Endothelial cell of umbilical vein (primary cell): ENCODE measurements at regions of chr21 and their contacts with region 1.

Region 1: GRCh38 chr21:15729674-15730483 is at the start of gene USP25:
- DNase-seq: peak; percentile 75
- H3K4me3 ChIP-seq: peak within 1 kb of the TSS; percentile 92 to 99 (median 95)
- H3K27ac ChIP-seq: peak within 1 kb of the TSS; percentile 82
- H3K4me1 ChIP-seq: peaks cover 19% of the 10 kb centered on the region
- H3K27me3 ChIP-seq: no peaks in the 10 kb centered on the region
- CTCF ChIP-seq: no peak
- POLR2A ChIP-seq: peak; percentile 82
- total RNA-seq, gene USP25: 66.9 and 67.5 TPM in 2 replicates

Region 2: GRCh38 chr21:15455819-15456462 is 273.9 kb before region 1 on chr21:
- CTCF ChIA-PET with region 1: no interaction called
- POLR2A ChIA-PET with region 1: no interaction called
- dilution Hi-C with region 1: no loop called
- intact Hi-C with region 1: no loop called
- DNase-seq: no peak
- H3K4me3 ChIP-seq: no peak overlapping the region
- H3K27ac ChIP-seq: no peak overlapping the region
- H3K4me1 ChIP-seq: no peaks in the 10 kb centered on the region
- H3K27me3 ChIP-seq: no peaks in the 10 kb centered on the region
- CTCF ChIP-seq: no peak
- POLR2A ChIP-seq: no peak

Region 3: DNA sequence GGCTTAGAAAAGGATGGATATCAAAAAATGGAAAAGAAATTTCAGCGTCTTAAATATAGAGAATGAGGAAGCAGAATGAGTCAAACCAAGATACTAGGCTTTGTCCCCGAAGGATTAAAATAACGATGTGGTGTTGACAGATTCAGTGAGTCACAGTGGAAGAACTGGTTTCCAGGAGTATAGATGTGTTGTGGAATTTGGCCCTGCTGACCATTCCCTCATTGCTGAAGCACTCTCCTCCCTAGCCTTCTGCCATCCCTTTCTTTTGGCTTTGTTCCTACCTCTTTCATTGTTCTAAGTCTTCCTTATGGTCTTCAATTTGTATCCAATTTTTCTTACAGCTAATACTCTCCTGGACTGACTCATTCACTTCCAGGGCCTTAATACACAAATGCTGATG is 23.2 kb before region 1 on chr21:
- CTCF ChIA-PET with region 1: interaction called, 5 read pairs
- POLR2A ChIA-PET with region 1: no interaction called
- dilution Hi-C with region 1: no loop called
- intact Hi-C with region 1: loop called (anchors 1 kb)
- DNase-seq: peak; percentile 95
- H3K4me3 ChIP-seq: no peak overlapping the region
- H3K27ac ChIP-seq: no peak overlapping the region
- H3K4me1 ChIP-seq: peaks cover 8% of the 10 kb centered on the region
- H3K27me3 ChIP-seq: no peaks in the 10 kb centered on the region
- CTCF ChIP-seq: no peak
- POLR2A ChIP-seq: no peak

Region 4: DNA sequence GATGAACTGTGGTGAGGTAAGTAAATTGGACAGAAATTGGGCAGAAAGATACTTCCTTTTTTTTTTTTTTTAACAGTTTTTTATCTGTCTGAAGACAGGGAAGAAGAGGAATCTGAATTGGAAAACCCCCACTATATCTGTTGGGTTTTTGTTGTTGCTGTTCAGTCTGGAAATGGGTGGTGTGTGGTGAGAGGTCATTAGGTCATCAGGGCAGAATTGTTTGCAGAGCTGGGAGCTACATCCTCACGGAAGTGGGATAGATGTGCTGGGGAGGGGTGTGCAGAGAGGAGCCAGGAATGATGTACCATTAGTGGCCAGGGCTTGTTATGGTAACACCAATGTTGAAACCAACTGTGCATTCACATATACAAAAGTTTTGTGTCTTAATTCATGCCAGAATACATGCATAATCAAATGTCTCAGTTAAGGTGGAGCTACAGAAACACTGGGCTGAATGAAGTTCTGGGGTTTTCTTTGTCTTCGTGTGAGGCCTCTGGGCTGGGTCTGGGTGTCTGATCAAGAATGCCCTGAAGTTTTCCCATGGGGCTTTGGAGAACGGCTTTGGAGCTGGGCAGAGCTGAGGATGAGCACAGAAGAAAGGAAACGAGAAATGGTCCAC is 12.3 kb after region 1 on chr21:
- CTCF ChIA-PET with region 1: interaction called, 3 read pairs
- POLR2A ChIA-PET with region 1: no interaction called
- dilution Hi-C with region 1: no loop called
- intact Hi-C with region 1: loop called (anchors 1 kb)
- DNase-seq: peak; percentile 55
- H3K4me3 ChIP-seq: no peak overlapping the region
- H3K27ac ChIP-seq: no peak overlapping the region
- H3K4me1 ChIP-seq: peaks cover 39% of the 10 kb centered on the region
- H3K27me3 ChIP-seq: no peaks in the 10 kb centered on the region
- CTCF ChIP-seq: no peak
- POLR2A ChIP-seq: no peak

Region 5: GRCh38 chr21:15826147-15826780 is 96.4 kb after region 1 on chr21:
- CTCF ChIA-PET with region 1: interaction called, 5 read pairs
- POLR2A ChIA-PET with region 1: no interaction called
- dilution Hi-C with region 1: no loop called
- intact Hi-C with region 1: loop called (anchors 1 kb)
- DNase-seq: peak; percentile 74
- H3K4me3 ChIP-seq: no peak overlapping the region
- H3K27ac ChIP-seq: no peak overlapping the region
- H3K4me1 ChIP-seq: peaks cover 7% of the 10 kb centered on the region
- H3K27me3 ChIP-seq: no peaks in the 10 kb centered on the region
- CTCF ChIP-seq: peak; percentile 36 to 40
- POLR2A ChIP-seq: no peak